SK-N-SH (cell line): ENCODE measurements at regions of chr2 and their contacts with region 1.

Region 1: GRCh38 chr2:46050489-46050888 is 246.7 kb upstream of the EPAS1 start:
- DNase-seq: no peak
- H3K4me3 ChIP-seq: no peak overlapping the region
- H3K27ac ChIP-seq: no peak overlapping the region
- H3K4me1 ChIP-seq: peaks cover 0 to 9% of the 10 kb centered on the region in 2 experiments; a peak in 1 of 4 replicates
- H3K27me3 ChIP-seq: no peaks in the 10 kb centered on the region
- CTCF ChIP-seq: peak; percentile 21; the same call in 1 of the 2 replicates
- EP300 ChIP-seq: no peak
- RAD21 ChIP-seq: no peak

Region 2: GRCh38 chr2:45964226-45964845 is 86.2 kb before region 1 on chr2:
- CTCF ChIA-PET with region 1: no interaction called
- POLR2A ChIA-PET with region 1: no interaction called
- DNase-seq: peak; percentile 78
- H3K4me3 ChIP-seq: peak overlapping the region in 1 of 2 experiments; percentile 31; a peak in 2 of 4 replicates
- H3K27ac ChIP-seq: peak overlapping the region; percentile 72
- H3K4me1 ChIP-seq: peaks cover 31 to 43% of the 10 kb centered on the region in 2 experiments
- H3K27me3 ChIP-seq: no peaks in the 10 kb centered on the region
- CTCF ChIP-seq: no peak
- EP300 ChIP-seq: peak; percentile 72 to 99
- RAD21 ChIP-seq: peak; percentile 18; the same call in 1 of the 2 replicates

Region 3: GRCh38 chr2:46036929-46037328 is 13.6 kb before region 1 on chr2:
- CTCF ChIA-PET with region 1: interaction called, 10 read pairs
- POLR2A ChIA-PET with region 1: no interaction called
- DNase-seq: no peak
- H3K4me3 ChIP-seq: no peak overlapping the region
- H3K27ac ChIP-seq: no peak overlapping the region
- H3K4me1 ChIP-seq: no peaks in the 10 kb centered on the region; a peak in 1 of 4 replicates
- H3K27me3 ChIP-seq: no peaks in the 10 kb centered on the region
- CTCF ChIP-seq: no peak
- EP300 ChIP-seq: peak in 1 of 2 experiments; percentile 53; a peak in 1 of 4 replicates
- RAD21 ChIP-seq: no peak

Region 4: DNA sequence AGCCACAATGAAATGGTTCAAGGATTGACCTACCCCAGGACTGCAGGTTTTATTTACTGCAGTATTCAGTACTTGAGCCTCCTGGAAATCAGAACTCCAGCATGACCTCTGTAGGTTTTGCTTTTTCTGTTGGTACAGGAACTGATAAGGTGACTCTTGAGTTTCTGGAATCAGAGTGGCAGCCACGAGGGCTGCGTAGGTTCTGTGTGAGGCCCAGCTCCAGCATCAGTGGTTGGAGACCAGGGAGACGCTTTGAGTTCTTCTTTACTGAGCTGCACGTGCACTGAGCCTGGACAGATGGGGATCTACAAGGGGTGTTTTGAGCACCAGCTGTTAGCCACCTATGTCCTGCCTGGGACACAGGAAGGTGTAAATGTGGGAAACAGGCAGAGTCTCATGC is 24.0 kb after region 1 on chr2:
- CTCF ChIA-PET with region 1: no interaction called
- POLR2A ChIA-PET with region 1: no interaction called
- DNase-seq: no peak
- H3K4me3 ChIP-seq: peak overlapping the region; percentile 37 to 56; a peak in 3 of 4 replicates
- H3K27ac ChIP-seq: peak overlapping the region; percentile 93 to 94
- H3K4me1 ChIP-seq: peaks cover 32 to 34% of the 10 kb centered on the region in 2 experiments
- H3K27me3 ChIP-seq: no peaks in the 10 kb centered on the region
- CTCF ChIP-seq: no peak
- EP300 ChIP-seq: no peak
- RAD21 ChIP-seq: no peak